ENCODE measurements at regions of chr2 and their contacts with region 1.

Region 1: GRCh38 chr2:174553811-174554493 is 43.7 kb downstream of the WIPF1 start:
- DNase-seq: peak; percentile 48
- CTCF ChIP-seq: no peak

Region 2: GRCh38 chr2:174536304-174536703 is 17.6 kb before region 1 on chr2:
- CTCF ChIA-PET with region 1: no interaction called
- POLR2A ChIA-PET with region 1: no interaction called
- DNase-seq: no peak
- CTCF ChIP-seq: no peak

Region 3: GRCh38 chr2:174568425-174568824 is 14.5 kb after region 1 on chr2:
- CTCF ChIA-PET with region 1: interaction called, 23 read pairs
- POLR2A ChIA-PET with region 1: no interaction called
- DNase-seq: no peak
- CTCF ChIP-seq: no peak

Region 4: DNA sequence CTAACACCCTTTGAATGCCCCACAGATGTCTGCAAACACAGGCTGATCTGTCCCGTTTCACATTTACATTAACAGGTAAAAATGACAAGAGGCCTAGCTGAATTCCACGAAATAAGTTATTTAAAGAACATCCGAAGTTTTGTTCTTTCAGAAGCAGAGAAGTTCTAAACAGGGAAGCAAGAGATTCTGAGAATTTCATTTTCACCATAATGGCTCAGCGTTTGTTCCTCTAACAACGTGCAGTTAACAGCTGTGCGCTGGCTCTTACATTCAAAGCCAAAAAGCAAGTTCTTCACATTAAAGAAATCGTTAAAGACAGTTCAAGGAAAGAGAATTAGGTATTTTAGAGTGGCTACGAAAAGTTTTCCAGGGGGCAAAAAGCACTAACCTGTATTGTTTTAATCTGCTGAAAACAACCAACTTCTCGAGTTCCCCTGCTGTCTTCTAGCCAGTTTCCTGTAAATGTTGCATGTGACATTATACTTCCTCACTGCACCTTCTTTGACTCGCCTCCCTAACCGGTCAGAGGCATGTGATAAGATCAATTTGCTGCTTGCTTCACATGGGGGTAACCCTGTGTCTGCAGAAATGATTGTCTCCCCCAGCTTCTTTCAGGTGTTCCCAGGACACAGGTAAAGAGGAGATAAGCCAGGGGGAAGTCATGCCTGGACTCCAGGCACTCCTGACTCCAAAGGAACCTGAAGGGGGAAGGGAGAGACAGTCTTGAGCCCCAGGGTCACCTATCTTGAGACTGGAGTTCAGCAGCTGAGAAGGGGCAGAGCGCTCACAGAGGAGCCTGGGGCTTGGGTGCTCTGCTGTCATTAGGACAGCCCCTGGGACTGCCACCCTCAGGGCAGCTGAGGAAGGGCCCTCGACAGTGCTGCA is 80.4 kb after region 1 on chr2:
- CTCF ChIA-PET with region 1: no interaction called
- POLR2A ChIA-PET with region 1: no interaction called
- DNase-seq: peak; percentile 49
- CTCF ChIP-seq: peak; percentile 35

Measured in GM10248 (cell line).